ENCODE measurements at regions of chr6 and their contacts with region 1.

Region 1: DNA sequence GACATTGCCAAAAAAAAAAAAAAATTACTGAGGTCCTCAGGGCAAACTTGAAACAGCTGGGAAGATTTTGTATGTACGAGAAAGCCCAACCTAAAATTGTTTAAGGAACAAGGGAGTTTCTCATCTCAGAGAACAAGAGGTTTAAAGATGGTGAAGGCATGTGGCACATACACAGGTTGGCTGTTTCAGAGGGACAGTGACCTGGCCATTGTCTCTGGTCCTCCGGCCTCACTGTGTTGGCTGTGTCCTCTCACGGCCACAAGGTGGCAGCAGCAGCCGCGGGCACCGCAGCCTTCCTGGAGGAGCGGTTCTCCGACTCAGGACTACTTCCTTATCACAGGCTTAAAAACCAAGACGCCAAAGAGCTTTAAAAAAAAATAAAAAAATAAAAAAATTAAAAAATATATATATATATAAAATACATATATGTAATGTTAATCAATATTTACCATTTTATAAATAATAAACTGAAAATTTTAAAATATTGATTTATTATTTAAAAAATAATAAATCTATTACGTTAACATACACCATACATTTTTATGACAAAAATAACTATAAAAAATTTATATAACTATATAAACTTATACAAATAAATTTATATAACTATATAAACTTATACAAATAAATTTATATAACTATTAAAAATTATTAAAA is 52.8 kb downstream of the GTF2H5 start:
- DNase-seq: no peak
- H3K4me3 ChIP-seq: no peak overlapping the region
- H3K27me3 ChIP-seq: no peaks in the 10 kb centered on the region
- CTCF ChIP-seq: peak; percentile 90

Region 2: DNA sequence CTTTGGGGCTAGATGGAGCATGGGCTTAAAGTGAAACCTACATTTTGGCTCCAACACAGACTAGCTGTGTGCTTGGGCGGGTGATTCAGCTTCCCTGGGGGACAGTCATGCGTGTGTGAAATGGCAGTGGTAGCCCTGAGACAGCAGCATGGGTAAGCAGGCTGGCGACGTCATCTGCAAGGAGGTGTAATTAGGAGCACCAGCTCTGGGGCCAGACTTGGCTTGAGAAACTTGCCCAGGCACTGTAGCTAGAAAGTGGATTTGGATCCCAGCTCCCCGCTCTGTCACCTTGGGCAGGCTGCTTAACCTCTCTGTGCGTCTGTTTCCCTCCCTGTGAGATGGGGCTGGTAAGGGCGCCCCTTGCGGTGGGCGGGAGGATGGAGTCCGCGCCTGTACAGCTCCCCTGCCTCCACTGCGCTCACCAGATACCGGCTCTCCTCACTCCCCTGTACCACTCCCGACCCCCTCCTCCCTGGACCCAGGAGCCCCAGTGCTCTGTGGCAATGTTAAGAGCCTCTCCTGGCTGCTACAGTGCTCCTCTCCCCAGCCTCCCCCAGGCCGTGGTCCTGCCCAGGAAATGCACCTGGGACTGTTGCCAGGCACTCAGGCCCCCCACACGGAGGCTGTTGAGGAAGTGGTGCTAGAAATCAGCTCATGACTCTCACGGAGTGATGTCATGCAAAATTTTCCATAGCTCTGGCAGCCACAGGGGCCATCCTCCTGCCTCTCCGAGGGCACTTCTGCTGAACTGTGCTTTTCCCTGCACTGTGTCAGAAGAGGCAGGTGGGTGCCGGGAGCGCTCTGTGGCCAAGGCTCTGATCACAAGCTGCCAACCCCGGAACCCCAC is 194.6 kb before region 1 on chr6:
- CTCF ChIA-PET with region 1: no interaction called
- POLR2A ChIA-PET with region 1: no interaction called
- DNase-seq: peak; percentile 88
- H3K4me3 ChIP-seq: no peak overlapping the region
- H3K27me3 ChIP-seq: no peaks in the 10 kb centered on the region
- CTCF ChIP-seq: peak; percentile 49

Region 3: GRCh38 chr6:158290659-158291058 is 69.7 kb after region 1 on chr6:
- CTCF ChIA-PET with region 1: no interaction called
- POLR2A ChIA-PET with region 1: no interaction called
- DNase-seq: no peak
- H3K4me3 ChIP-seq: no peak overlapping the region
- H3K27me3 ChIP-seq: no peaks in the 10 kb centered on the region
- CTCF ChIP-seq: no peak

Region 4: GRCh38 chr6:158344534-158344933 is 123.6 kb after region 1 on chr6:
- CTCF ChIA-PET with region 1: no interaction called
- POLR2A ChIA-PET with region 1: no interaction called
- DNase-seq: no peak
- H3K4me3 ChIP-seq: no peak overlapping the region
- H3K27me3 ChIP-seq: no peaks in the 10 kb centered on the region
- CTCF ChIP-seq: no peak

Region 5: DNA sequence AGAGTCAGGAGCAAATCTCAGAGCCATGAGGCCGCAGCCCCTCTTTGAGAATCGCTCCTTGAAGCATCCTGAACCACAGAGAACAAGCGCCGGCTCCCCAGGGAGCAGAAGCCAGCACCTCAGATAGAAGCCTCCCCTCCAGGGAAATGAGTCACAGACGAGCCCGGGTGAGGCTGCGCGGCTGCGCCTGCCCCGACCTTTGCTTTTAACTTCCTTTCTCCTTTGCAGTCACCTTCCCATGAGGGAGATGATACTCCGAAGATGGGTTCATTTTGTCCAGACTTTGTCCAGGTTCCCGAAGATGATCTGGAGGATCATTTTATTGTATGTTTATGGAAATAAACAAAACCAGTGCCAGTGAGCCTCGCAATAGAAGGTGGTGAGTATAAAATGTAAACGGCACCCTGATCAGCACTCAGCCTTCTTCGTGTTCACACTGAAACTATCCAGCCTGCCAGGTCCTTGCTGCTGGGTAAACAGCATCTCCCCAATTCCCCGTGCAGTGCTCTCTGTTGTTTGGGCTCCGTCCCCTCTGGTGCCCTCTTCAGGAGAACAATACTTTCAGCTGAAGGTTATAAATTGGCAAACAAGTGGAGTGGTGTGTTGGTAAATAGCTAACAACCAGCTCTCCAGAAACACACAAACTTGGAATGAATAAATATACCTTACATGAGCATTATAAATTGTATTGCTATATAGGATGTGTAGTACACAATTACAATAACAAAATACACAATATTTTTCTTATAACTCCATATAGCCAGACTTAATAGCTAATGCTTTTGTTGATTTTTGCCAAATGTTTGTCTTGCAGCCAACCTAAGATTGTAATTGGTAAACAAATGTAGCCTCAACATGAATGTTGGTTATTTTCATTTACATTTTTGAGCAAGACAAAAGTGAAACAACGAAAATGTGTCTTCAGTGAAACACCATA is 297.5 kb after region 1 on chr6:
- CTCF ChIA-PET with region 1: interaction called, 28 read pairs
- POLR2A ChIA-PET with region 1: no interaction called
- DNase-seq: peak; percentile 42
- H3K4me3 ChIP-seq: peak overlapping the region; percentile 32
- H3K27me3 ChIP-seq: no peaks in the 10 kb centered on the region
- CTCF ChIP-seq: peak; percentile 79

Region 6: GRCh38 chr6:158548418-158549161 is 327.7 kb after region 1 on chr6:
- CTCF ChIA-PET with region 1: no interaction called
- POLR2A ChIA-PET with region 1: interaction called, 21 read pairs
- DNase-seq: no peak
- H3K4me3 ChIP-seq: no peak overlapping the region
- H3K27me3 ChIP-seq: peaks cover 3% of the 10 kb centered on the region; the same call in 1 of the 2 replicates
- CTCF ChIP-seq: no peak

Region 7: GRCh38 chr6:158611541-158612370 is 390.8 kb after region 1 on chr6:
- CTCF ChIA-PET with region 1: interaction called, 185 read pairs
- POLR2A ChIA-PET with region 1: no interaction called
- DNase-seq: no peak
- H3K4me3 ChIP-seq: no peak overlapping the region
- H3K27me3 ChIP-seq: no peaks in the 10 kb centered on the region
- CTCF ChIP-seq: no peak